Head of caudate nucleus (tissue), 42 donors: ENCODE measurements at regions of chr1 and their contacts with region 1.

Region 1: DNA sequence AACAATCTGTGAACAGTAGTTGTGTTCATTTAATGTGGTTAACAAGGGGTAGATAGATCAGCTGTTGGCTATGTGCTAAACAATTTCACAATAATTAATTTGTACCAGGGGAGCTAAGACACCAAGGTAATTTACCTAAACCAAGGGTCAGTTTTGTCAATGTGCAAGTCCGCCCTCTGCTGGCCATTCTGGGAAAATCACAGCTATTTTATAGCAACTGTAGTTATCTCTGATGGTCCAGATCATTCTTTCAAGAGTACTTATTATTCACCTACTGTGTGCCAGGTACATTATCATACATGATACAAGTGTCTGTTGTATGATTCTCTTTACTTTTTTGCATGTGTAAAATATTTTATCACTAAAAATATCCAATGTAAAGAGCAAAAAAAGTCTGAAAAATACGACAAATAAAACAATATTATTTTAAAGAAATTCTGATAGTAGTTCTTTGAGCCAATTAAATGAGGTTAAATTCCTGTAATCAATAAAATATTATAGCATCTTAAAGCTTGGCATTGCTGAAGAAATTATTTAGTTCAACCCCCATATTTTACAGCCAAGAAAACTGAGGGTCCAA is 312.3 kb upstream of the FAM78B start:
- DNase-seq: peak; percentile 20 to 86 (median 64)

Region 2: GRCh38 chr1:165928075-165928731 is 550.9 kb before region 1 on chr1:
- intact Hi-C with region 1: loop called (anchors 5 kb)
- DNase-seq: peak in 41 of 42 donors; percentile 18 to 84 (median 59)

Region 3: DNA sequence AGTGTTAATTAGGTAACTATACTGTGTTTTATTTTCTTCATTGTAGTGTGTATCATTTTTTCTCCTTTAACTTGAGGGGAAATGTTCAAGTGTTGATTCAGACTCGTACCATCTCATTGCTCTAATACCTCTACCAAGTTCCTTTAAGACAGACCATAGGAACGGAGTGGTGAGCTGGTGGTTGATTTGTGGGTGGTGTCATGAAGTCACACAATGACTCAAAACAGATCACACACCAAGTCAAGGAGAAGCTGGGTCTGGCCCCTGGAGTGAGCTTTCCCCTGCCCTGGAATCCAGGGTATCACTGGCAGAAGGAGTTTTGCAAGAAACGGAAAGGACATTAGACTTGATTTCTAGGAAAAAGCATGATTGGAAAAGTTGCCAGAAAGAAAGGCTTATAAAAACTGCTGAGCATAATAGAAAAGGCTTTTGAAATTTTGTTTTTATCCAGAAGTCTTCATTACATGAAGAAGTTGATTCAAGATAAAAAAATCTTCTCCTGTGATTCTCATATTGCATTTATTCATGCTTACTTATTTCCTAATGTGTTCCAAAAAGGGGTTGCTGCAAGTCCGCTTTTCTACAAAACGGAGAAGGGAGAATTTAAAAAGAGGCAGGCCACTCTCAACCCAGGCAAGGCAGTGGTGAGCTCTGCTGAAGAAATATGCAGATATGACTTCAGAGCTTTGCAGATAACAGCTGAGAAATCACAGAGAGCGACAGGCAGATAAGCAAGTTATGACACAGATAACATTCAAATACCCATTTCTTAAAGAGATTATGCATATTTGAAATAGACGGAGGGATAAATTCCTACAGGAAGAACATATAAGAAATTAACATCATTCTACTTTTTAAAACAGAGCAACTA is 1881.2 kb after region 1 on chr1:
- intact Hi-C with region 1: no loop called
- DNase-seq: no peak